Heart left ventricle (tissue), 16 donors: ENCODE measurements at regions of chr2 and their contacts with region 1.

Region 1: GRCh38 chr2:219155054-219155644 is 5.5 kb downstream of the NHEJ1 start:
- DNase-seq: peak in 2 of 5 donors; percentile 33
- ATAC-seq: peak in 3 of 4 donors; percentile 51 to 64 (median 61)
- H3K4me3 ChIP-seq: no peak overlapping the region
- H3K27ac ChIP-seq: no peak overlapping the region
- H3K4me1 ChIP-seq: peaks cover 0 to 9% (median 6%) of the 10 kb centered on the region in 12 donors
- H3K27me3 ChIP-seq: no peaks in the 10 kb centered on the region
- CTCF ChIP-seq: peak; percentile 49 to 76 (median 64)
- POLR2A ChIP-seq: no peak

Region 2: GRCh38 chr2:218852911-218853667 is 302.1 kb before region 1 on chr2:
- intact Hi-C with region 1: loop called in 1 of 10 experiments (anchors 10 kb)
- DNase-seq: peak in 2 of 5 donors; percentile 36 to 53
- ATAC-seq: peak in 3 of 4 donors; percentile 48 to 70 (median 60)
- H3K4me3 ChIP-seq: no peak overlapping the region
- H3K27ac ChIP-seq: no peak overlapping the region
- H3K4me1 ChIP-seq: peaks cover 0 to 11% (median 0%) of the 10 kb centered on the region in 12 donors
- H3K27me3 ChIP-seq: peaks cover 0 to 78% (median 46%) of the 10 kb centered on the region in 9 donors
- CTCF ChIP-seq: peak; percentile 43 to 75 (median 63)
- POLR2A ChIP-seq: no peak

Region 3: DNA sequence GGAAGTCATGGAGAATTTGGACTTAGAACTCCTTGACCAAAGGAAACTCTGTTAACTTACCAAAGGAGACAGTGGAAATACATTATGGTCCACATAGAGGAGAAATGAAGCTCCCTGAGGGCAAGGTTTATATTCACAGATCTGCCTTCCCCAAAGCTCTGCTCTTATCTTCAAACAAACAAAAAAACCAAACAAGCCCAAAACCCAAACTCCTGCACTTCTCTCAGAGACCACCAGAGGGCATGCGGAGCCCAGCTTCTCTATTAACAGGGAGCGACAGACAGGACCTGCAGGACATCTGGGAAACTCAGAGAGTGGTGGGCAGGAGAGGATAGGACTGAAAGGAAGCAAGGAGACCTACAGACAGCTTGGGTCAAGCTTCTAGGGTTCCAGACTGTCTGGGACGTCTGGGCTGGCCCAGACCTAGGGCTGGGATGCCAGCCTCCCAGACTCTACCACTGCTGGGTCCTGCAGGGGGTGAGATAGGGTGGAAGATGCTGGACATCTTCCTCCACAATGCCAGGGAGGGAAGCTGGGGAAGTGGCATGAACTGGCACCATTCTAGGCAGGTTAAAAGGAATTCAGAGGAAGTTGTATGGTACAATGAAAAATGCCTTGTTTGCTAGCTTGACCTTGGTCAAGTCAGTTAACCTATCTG is 278.5 kb before region 1 on chr2:
- intact Hi-C with region 1: loop called in 3 of 10 experiments (anchors 10 kb)
- DNase-seq: peak in 4 of 5 donors; percentile 46 to 62 (median 53)
- ATAC-seq: peak in 3 of 4 donors; percentile 9 to 50 (median 48)
- H3K4me3 ChIP-seq: no peak overlapping the region
- H3K27ac ChIP-seq: no peak overlapping the region
- H3K4me1 ChIP-seq: peaks cover 0 to 32% (median 10%) of the 10 kb centered on the region in 12 donors
- H3K27me3 ChIP-seq: peaks cover 48 to 100% (median 89%) of the 10 kb centered on the region in 9 donors
- CTCF ChIP-seq: peak; percentile 84 to 96 (median 92)
- POLR2A ChIP-seq: no peak

Region 4: GRCh38 chr2:218995972-218996711 is 159.0 kb before region 1 on chr2:
- intact Hi-C with region 1: loop called in 3 of 10 experiments (anchors 10 kb)
- DNase-seq: peak; percentile 82 to 89 (median 87)
- ATAC-seq: peak; percentile 72 to 95 (median 90)
- H3K4me3 ChIP-seq: peak overlapping the region in 10 of 12 donors; percentile 24 to 48 (median 35)
- H3K27ac ChIP-seq: no peak overlapping the region
- H3K4me1 ChIP-seq: peaks cover 0 to 29% (median 18%) of the 10 kb centered on the region in 12 donors
- H3K27me3 ChIP-seq: peaks cover 49 to 93% (median 84%) of the 10 kb centered on the region in 9 donors
- CTCF ChIP-seq: peak; percentile 79 to 95 (median 88)
- POLR2A ChIP-seq: no peak

Region 5: GRCh38 chr2:219029829-219030165 is 125.4 kb before region 1 on chr2:
- intact Hi-C with region 1: loop called in 3 of 10 experiments (anchors 1 to 10 kb)
- DNase-seq: peak; percentile 68 to 85 (median 77)
- ATAC-seq: peak in 3 of 4 donors; percentile 80 to 89 (median 85)
- H3K4me3 ChIP-seq: no peak overlapping the region
- H3K27ac ChIP-seq: no peak overlapping the region
- H3K4me1 ChIP-seq: no peaks in the 10 kb centered on the region
- H3K27me3 ChIP-seq: peaks cover 8 to 46% (median 20%) of the 10 kb centered on the region in 9 donors
- CTCF ChIP-seq: peak; percentile 88 to 98 (median 96)
- POLR2A ChIP-seq: no peak

Region 6: GRCh38 chr2:219041252-219041651 is 113.9 kb before region 1 on chr2 and contains the start of gene CFAP65:
- intact Hi-C with region 1: no loop called
- DNase-seq: no peak
- ATAC-seq: peak in 2 of 4 donors; percentile 42 to 48
- H3K4me3 ChIP-seq: peak within 1 kb of the TSS in 7 of 12 donors; percentile 9 to 37 (median 26)
- H3K27ac ChIP-seq: no peak within 1 kb of the TSS
- H3K4me1 ChIP-seq: peaks cover 0 to 6% (median 0%) of the 10 kb centered on the region in 12 donors
- H3K27me3 ChIP-seq: peaks cover 8 to 78% (median 33%) of the 10 kb centered on the region in 9 donors
- CTCF ChIP-seq: no peak
- POLR2A ChIP-seq: no peak
- total RNA-seq, gene CFAP65: 0.04 TPM in 1 of 9 donors, not detected in the others

Region 7: GRCh38 chr2:219073413-219074129 is 81.6 kb before region 1 on chr2:
- intact Hi-C with region 1: loop called in 1 of 10 experiments (anchors 5 kb)
- DNase-seq: no peak
- ATAC-seq: no peak
- H3K4me3 ChIP-seq: no peak overlapping the region
- H3K27ac ChIP-seq: no peak overlapping the region
- H3K4me1 ChIP-seq: peaks cover 0 to 12% (median 0%) of the 10 kb centered on the region in 12 donors
- H3K27me3 ChIP-seq: no peaks in the 10 kb centered on the region
- CTCF ChIP-seq: peak; percentile 38 to 62 (median 54)
- POLR2A ChIP-seq: no peak

Region 8: DNA sequence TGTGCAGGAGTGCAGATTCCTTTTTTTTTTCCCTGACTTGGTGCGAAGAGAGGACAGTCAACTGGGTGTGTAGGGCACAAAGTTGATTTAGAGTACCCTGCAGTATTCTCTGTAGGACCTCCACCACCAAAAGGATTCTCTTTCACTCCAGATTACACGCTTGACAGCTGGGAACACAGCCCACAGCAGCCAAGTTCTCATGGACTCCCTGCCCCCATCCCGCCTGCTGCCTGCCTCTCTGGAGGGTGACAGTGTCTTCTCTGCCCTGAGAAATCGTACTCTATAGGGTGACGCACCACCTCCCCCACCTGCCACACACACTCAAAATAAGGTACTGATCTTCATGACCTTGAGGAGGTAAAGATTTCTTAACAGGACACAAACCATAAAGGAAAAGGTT is 67.8 kb before region 1 on chr2:
- intact Hi-C with region 1: no loop called
- DNase-seq: no peak
- ATAC-seq: no peak
- H3K4me3 ChIP-seq: no peak overlapping the region
- H3K27ac ChIP-seq: no peak overlapping the region
- H3K4me1 ChIP-seq: peaks cover 0 to 33% (median 7%) of the 10 kb centered on the region in 12 donors
- H3K27me3 ChIP-seq: no peaks in the 10 kb centered on the region
- CTCF ChIP-seq: no peak
- POLR2A ChIP-seq: no peak

Region 9: DNA sequence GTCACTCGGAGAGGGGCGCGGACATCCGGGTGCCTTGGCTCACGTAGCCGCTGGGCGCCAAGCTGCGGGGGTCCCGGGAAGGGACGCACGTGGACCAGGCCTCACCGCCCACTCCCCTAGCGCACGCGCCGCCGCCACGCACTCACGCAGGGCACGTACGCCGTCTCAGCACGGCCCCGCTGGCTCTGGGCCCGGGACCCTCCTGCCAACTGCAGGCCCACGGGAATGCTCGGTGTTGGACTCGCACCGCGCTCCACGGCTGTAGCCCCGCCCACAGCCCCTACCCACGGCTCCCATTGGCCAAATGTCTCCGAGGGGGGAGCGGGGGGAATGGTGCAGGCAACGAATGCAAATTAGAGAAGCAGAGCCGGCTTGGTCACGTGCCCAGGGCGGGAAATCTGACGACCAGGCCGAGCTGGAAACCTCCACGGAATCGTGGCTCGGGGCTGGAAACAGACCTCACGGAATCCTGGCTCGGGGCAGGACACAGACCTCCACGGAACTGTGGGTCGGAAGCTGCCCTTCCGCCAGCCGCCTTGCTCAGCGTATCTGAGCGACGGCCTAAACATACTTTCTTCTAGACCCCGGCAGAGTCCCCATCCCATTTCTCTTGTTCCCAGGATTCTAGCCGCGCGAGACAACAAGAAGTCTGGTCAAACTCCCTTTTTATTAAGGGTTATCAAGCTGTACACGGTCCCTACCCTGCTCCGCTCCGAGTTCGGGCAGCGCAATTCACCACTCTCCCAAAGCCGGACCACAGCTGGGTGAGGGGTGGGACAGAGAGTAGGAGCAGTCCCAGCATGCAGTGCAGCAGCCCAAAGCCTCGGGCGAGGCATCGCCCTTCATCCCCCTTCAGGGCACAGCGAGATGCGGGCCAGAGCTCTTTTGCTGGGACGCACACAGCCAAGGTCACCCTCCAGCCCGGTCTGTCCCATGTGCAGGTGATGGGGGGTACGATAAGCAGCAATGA is 63.9 kb after region 1 on chr2 and contains the start of gene ABCB6:
- intact Hi-C with region 1: no loop called
- DNase-seq: peak; percentile 97 to 99 (median 98)
- ATAC-seq: peak; percentile 86 to 93 (median 90)
- H3K4me3 ChIP-seq: peak within 1 kb of the TSS; percentile 19 to 66 (median 58)
- H3K27ac ChIP-seq: peak within 1 kb of the TSS; percentile 68 to 97 (median 90)
- H3K4me1 ChIP-seq: peaks cover 6 to 42% (median 33%) of the 10 kb centered on the region in 12 donors
- H3K27me3 ChIP-seq: no peaks in the 10 kb centered on the region
- CTCF ChIP-seq: no peak
- POLR2A ChIP-seq: peak; percentile 7 to 84
- total RNA-seq, gene ABCB6: 12.1 to 28.1 (median 17.9) TPM